Heart right ventricle (tissue), 16 donors: ENCODE measurements at regions of chr3 and their contacts with region 1.

Region 1: GRCh38 chr3:197959898-197960693 is at the start of gene LMLN:
- DNase-seq: peak; percentile 96
- ATAC-seq: peak; percentile 98 to 99 (median 99)
- H3K4me3 ChIP-seq: peak within 1 kb of the TSS; percentile 48 to 91 (median 80)
- H3K27ac ChIP-seq: peak within 1 kb of the TSS in 9 of 10 donors; percentile 61 to 90 (median 80)
- H3K4me1 ChIP-seq: peaks cover 0 to 63% (median 27%) of the 10 kb centered on the region in 9 donors
- H3K27me3 ChIP-seq: no peaks in the 10 kb centered on the region
- CTCF ChIP-seq: no peak
- total RNA-seq, gene LMLN: 8.7 to 15.2 (median 11.0) TPM

Region 2: DNA sequence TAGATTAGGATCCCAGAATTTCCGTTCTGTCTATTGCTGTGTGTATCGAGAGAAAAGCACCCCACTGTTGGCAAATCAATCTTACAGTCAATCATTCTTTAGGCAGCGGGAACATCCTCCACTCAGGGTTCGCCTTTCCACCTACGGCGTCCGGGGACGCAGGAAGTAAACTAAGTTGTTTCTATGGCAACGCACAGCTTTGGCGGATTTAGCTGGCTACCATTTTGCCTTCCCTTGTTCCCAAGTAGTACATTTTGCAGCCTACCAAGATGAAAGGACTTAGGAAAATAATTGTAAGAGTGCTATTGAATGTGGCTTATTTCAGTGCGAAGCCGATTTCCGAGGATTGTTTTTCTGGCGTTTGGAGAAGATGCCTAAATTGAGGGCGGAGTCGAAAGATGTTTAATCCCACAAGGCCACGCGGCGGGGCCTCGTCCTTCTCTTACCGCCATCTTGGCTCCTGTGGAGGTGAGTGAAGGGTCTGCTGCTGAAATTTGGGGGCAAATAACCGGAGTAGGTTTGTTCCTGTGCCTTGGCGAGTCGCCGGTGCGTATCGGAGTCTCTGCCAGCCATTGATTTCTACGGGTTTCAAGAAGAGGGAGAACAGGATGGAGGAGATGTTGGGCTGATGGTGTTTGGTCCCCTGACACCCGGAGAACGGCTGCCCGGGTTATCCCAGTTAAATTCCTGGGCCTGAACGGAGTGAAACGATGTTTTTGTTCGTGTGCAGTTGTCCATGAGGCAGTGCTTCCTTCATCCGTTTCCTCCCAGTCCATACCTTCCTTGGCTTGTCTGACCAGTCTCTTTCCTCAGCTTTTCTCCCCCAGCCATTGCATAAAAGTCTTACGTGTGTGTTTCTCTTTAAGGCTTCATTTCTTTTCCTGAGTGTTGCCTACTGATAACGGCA is 10.1 kb before region 1 on chr3 and contains the start of gene RPL35A:
- intact Hi-C with region 1: loop called in 1 of 10 experiments (anchors 1 kb)
- DNase-seq: peak; percentile 82 to 90
- ATAC-seq: peak; percentile 84 to 95 (median 92)
- H3K4me3 ChIP-seq: peak within 1 kb of the TSS; percentile 45 to 84 (median 69)
- H3K27ac ChIP-seq: peak within 1 kb of the TSS; percentile 76 to 94 (median 86)
- H3K4me1 ChIP-seq: peaks cover 12 to 50% (median 45%) of the 10 kb centered on the region in 9 donors
- H3K27me3 ChIP-seq: no peaks in the 10 kb centered on the region
- CTCF ChIP-seq: no peak
- total RNA-seq, gene RPL35A: 674 to 856 (median 795) TPM